ENCODE measurements at regions of chr2 and their contacts with region 1.

Region 1: GRCh38 chr2:233353769-233354499 is at the start of gene DGKD:
- DNase-seq: no peak
- H3K4me3 ChIP-seq: peak within 1 kb of the TSS; percentile 71 to 86 (median 72)
- H3K27ac ChIP-seq: peak within 1 kb of the TSS; percentile 49 to 66 (median 56)
- H3K4me1 ChIP-seq: peaks cover 21 to 58% (median 50%) of the 10 kb centered on the region in 4 donors
- H3K27me3 ChIP-seq: no peaks in the 10 kb centered on the region
- CTCF ChIP-seq: peak in 2 of 3 experiments; percentile 66 to 73
- EP300 ChIP-seq: no peak
- POLR2A ChIP-seq: no peak
- total RNA-seq, gene DGKD: 11.6 to 16.1 (median 13.3) TPM

Region 2: DNA sequence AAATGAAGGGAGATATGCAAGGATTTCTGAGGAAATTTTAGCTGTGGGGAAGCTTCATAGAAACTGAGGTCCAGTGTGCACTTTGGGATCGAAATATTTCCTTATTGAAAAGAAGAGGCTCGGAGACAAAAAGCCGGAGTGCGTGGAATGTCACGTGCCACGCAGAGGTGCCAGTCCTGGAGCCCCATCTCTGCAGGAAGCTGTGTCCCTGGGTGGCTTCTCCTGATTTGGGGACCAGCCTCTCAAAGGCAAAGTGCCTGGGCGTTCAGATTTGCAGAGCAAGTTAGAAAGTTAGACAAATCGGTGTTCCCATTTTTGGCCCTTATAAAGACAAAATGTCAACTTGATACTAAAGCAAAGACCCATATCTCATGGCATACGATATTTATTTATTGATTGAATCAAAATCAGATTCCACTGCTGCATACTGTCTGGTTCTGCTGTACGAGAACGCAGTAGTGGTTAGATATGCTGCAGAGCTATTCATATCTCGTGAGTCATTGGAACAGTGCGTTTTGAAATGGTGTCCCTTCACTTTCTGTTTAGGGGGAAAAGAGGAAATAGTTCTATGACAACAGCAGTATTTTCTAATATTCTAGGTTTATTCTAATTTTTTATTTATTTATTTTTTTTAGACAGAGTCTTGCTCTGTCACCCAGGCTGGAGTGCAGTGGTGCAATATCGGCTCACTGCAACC is 111.6 kb before region 1 on chr2:
- intact Hi-C with region 1: no loop called
- DNase-seq: no peak
- H3K4me3 ChIP-seq: no peak overlapping the region
- H3K27ac ChIP-seq: peak overlapping the region in 1 of 4 donors; percentile 15
- H3K4me1 ChIP-seq: no peaks in the 10 kb centered on the region
- H3K27me3 ChIP-seq: no peaks in the 10 kb centered on the region
- CTCF ChIP-seq: no peak
- EP300 ChIP-seq: no peak
- POLR2A ChIP-seq: no peak

Region 3: DNA sequence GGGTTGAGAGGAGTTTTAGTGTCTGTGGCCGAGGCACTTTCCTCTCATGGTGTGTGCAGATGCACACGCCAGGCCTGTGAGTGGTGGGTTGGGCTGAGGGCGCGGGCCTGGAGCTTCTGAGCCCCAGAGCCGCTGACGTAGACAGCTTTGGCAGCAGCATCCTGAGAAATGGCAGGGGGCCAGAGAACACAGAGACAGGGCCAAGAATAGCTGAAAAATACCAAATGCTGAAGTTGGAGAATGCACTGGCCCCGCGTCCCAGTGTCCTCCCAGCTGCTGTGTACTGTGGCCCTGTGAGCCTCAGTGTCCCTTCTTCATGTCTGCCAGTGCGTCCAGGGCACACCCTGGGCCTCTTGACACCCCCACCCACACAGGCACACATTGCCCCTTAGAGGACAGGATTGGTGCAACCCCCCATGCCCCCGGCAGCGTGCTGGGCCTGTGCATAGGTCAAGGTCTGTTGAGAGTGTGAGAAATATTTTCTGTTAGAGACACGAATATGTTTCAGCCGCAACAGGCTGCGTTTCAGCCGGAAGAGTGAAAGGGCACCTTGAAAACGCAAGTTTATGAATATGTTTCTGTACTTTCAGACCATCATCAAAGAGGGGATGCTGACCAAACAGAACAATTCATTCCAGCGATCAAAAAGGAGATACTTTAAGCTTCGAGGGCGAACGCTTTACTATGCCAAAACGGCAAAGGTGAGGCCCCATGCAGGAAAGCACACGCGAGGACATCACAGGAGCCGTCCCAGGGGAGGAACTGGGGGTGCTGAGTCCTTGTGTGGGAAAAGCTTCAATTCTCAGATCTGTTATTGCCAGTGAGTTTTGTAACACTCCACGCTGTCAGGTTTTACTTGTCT is 34.0 kb after region 1 on chr2:
- intact Hi-C with region 1: loop called (anchors 2 kb)
- DNase-seq: peak; percentile 97
- H3K4me3 ChIP-seq: peak overlapping the region; percentile 24 to 44 (median 35)
- H3K27ac ChIP-seq: peak overlapping the region; percentile 81 to 89 (median 86)
- H3K4me1 ChIP-seq: peaks cover 43 to 59% (median 51%) of the 10 kb centered on the region in 4 donors
- H3K27me3 ChIP-seq: no peaks in the 10 kb centered on the region
- CTCF ChIP-seq: peak in 1 of 3 experiments; percentile 4
- EP300 ChIP-seq: no peak
- POLR2A ChIP-seq: no peak

Region 4: DNA sequence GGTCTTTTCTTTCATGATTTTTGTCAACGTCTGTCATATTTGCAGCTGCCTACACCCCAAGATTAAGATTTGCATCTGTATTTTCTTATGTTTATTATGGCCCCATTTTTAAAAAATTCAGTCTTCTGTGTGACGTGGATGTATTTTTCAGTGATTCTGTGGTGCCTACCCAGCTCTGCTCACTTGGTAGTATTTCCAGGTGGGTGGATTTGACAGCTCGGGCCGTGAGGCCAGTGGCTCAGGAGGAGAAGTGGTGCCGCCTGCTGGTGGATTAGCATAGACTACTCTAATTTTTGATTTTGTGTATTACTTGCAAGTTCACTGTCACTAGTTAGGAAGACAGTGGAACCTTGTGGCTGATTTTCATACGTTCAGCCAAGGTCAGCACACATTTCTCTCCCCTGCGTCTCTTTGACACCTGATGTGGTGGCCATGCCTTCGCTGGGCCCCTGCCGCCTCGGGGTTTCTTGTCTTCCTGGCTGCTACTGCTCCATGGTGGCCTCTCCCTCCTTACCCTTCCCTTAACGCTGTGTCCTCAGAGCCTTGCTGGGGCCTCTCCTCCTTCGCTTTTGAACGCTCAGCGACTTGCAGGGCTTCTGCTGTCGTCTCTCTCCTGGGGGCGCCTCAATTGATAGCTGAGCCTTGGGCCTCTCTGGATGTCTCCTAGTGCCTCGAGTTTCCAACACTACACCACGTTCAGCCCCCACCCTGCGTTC is 89.7 kb after region 1 on chr2:
- intact Hi-C with region 1: loop called (anchors 2 kb)
- DNase-seq: peak; percentile 95
- H3K4me3 ChIP-seq: no peak overlapping the region
- H3K27ac ChIP-seq: peak overlapping the region in 1 of 4 donors; percentile 16
- H3K4me1 ChIP-seq: peaks cover 7 to 16% (median 11%) of the 10 kb centered on the region in 4 donors
- H3K27me3 ChIP-seq: no peaks in the 10 kb centered on the region
- CTCF ChIP-seq: peak; percentile 83 to 85 (median 85)
- EP300 ChIP-seq: no peak
- POLR2A ChIP-seq: no peak

Measured in esophagus muscularis mucosa (tissue), 4 donors.